GM12878 (cell line): ENCODE measurements at regions of chr12 and their contacts with region 1.

Region 1: DNA sequence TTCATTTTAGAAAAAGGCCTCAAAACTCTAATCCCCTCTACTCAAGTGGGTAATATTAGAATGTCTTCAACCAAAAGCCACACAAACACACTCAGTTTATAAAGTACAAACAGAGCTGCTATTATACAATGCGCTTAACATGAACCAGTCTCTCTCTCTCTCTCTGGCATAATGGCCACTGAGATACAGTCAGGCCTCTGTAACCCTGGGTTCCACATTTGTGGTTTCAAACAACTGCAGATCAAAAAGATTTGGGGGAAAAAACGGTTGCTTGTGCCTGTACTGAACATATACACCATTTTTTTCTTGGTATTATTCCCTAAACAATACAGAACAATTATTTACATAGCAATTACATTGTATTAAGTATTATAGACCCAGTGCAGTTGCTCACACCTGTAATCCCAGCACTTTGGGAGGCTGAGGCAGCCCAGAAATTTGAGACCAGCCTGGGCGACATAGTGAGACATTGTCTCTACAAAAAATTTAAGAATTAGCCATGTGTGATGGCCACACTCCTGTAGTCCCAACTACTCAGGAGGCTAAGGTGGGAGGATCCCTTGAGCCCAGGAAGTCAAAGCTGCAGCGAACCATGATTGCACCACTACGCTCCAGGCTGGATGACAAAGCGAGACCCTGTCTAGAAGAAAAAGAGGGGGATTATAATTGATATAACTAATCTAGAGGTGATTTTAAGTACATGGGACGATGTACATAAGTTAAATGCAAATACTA is 5.6 kb downstream of the SLC11A2 start:
- DNase-seq: no peak
- ATAC-seq: peak; percentile 9; the same call in 1 of the 3 replicates
- H3K4me3 ChIP-seq: no peak overlapping the region
- H3K27ac ChIP-seq: no peak overlapping the region
- H3K4me1 ChIP-seq: peaks cover 14% of the 10 kb centered on the region; the same call in 1 of the 2 replicates
- H3K27me3 ChIP-seq: no peaks in the 10 kb centered on the region
- CTCF ChIP-seq: no peak
- EP300 ChIP-seq: no peak
- POLR2A ChIP-seq: no peak
- RAD21 ChIP-seq: no peak

Region 2: GRCh38 chr12:51009056-51009440 is 11.6 kb before region 1 on chr12:
- CTCF ChIA-PET with region 1: interaction called, 7 read pairs
- POLR2A ChIA-PET with region 1: interaction called, 5 read pairs
- RAD21 ChIA-PET with region 1: interaction called, 7 read pairs
- SMC1A ChIA-PET with region 1: interaction called, 13 read pairs
- in situ Hi-C with region 1: no loop called
- intact Hi-C with region 1: no loop called
- DNase-seq: no peak
- ATAC-seq: peak; percentile 67
- H3K4me3 ChIP-seq: no peak overlapping the region
- H3K27ac ChIP-seq: no peak overlapping the region; the same call in 1 of the 2 replicates
- H3K4me1 ChIP-seq: no peaks in the 10 kb centered on the region; the same call in 1 of the 2 replicates
- H3K27me3 ChIP-seq: no peaks in the 10 kb centered on the region
- CTCF ChIP-seq: no peak
- EP300 ChIP-seq: no peak
- POLR2A ChIP-seq: no peak
- RAD21 ChIP-seq: no peak